AG04450 (cell line): ENCODE measurements at regions of chr19 and their contacts with region 1.

Region 1: GRCh38 chr19:4851551-4852290 is 15.7 kb downstream of the PLIN3 start:
- DNase-seq: no peak
- H3K4me3 ChIP-seq: no peak overlapping the region
- H3K27ac ChIP-seq: no peak overlapping the region
- H3K27me3 ChIP-seq: no peaks in the 10 kb centered on the region
- CTCF ChIP-seq: peak; percentile 84

Region 2: GRCh38 chr19:4723367-4724187 is 128.1 kb before region 1 on chr19 and contains the start of gene DPP9:
- CTCF ChIA-PET with region 1: no interaction called
- POLR2A ChIA-PET with region 1: no interaction called
- DNase-seq: peak; percentile 96
- H3K4me3 ChIP-seq: peak within 1 kb of the TSS; percentile 97
- H3K27ac ChIP-seq: peak within 1 kb of the TSS; percentile 39
- H3K27me3 ChIP-seq: no peaks in the 10 kb centered on the region
- CTCF ChIP-seq: peak; percentile 31
- polyA plus RNA-seq, gene DPP9: 5.6 and 9.0 TPM in 2 replicates

Region 3: DNA sequence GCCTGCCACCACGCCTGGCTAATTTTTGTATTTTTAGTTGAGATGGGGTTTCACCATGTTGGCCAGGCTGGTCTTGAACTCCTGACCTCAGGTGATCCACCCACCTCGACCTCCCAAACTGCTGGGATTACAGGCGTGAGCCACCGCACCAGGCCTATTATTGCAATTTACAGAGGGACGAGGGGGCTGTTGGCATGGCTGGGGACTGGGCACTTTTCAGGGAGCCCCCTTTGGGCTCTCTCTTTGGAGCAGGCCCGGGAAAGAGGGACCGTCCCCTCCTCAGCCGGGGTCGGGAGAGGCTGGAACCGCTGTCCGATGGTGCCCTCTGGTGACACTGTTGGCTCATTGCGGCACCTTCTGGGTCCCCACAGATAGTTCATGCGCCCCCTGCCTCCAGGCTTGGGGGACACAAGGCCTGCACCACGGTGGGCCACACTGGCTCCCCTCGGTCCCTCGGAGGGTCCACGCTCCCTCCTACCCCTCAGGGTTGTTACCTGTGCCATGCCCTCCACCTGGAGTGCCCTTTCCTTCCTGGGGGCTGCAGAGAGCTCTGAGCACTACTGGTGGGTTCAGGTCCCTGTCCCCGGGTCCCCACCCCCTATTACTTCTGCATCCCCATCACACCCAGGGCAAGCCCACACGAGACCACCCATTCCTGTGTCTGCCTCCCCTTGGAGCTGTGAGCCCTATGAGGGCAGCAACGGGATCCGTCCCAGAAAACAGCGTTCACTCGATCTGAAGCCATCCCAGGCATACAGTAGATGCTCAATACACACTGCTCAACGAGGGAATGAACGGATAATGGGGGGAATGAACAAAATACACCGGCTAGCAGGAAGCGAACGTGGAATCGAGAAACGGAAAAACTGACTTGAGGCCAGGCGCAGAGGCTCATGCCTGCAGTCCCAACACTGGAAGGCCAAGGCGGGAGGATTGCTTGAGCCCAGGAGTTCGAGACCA is 47.7 kb before region 1 on chr19:
- CTCF ChIA-PET with region 1: interaction called, 109 read pairs
- POLR2A ChIA-PET with region 1: interaction called, 6 read pairs
- DNase-seq: no peak
- H3K4me3 ChIP-seq: no peak overlapping the region
- H3K27ac ChIP-seq: no peak overlapping the region
- H3K27me3 ChIP-seq: no peaks in the 10 kb centered on the region
- CTCF ChIP-seq: peak; percentile 71

Region 4: DNA sequence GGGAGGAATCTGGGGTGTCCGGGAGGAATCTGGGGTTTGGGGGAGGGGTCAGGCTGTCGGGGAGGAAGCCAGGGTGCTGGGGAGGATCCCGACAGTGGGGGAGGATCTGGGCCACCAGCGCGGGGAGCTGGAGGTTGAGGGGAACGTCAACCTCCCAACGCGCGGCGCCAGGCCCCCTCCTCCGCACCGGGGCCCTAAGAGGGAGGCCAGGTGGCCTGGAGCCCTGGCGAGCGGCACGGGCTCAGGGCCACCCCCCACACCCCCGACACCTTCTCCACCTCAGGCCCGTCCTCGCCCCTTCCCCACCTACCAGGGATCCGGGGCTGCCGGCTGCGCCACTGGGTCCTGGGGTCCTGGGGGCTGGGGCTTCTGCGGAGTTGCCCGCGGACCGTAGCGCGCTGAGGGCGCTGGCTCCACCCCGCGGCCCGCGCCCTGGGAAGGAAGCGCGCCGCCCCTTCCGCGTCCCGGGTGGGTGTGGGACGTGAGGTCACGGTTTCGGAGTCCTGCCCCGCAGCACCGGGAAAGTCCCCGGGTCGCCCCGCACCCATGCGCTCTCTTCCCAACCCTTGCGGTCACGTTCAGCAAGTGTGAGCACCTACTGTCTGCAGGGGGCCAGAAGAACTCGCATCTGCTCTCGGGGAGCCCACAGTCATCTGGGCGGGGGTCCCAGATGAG is 20.3 kb before region 1 on chr19 and contains the start of gene TICAM1:
- CTCF ChIA-PET with region 1: interaction called, 10 read pairs
- POLR2A ChIA-PET with region 1: interaction called, 5 read pairs
- DNase-seq: no peak
- H3K4me3 ChIP-seq: peak within 1 kb of the TSS; percentile 84
- H3K27ac ChIP-seq: no peak within 1 kb of the TSS
- H3K27me3 ChIP-seq: no peaks in the 10 kb centered on the region
- CTCF ChIP-seq: no peak
- polyA plus RNA-seq, gene TICAM1: 1.0 and 2.9 TPM in 2 replicates

Region 5: DNA sequence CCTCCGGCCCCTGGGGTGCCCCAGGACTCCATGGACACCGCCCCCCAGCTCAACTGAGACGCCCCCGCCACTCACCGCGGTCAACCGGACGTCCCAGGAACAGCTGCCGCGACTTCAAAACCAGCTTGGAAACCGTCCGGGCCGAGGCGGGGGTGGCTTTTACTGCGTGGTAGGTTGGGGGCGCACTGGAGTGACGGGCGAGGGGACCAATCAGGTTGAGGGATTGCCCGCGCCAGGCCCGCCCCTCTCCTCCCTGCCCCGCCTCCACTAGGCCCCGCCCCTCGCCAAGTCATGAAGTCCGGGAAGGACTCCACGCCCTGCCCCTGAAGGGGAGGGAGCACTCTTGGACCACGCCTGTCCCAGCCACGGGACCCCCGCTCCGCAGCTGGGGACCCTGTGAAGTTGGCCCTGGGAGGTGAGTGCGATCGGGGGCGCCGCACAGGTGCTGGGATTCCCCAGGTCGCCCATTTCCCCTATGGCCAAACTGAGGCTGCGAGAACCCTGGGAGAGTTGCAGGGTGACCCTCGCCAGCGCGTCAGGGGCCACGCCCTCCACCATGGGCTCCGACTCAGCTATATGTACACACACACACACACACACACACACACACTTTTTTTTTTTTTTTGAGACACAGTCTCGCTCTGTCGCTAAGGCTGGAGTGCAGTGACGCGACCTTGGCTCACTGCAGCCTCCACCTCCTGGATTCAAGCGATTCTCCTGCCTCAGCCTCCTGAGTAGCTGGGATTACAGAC is 16.0 kb after region 1 on chr19 and contains the start of gene PLIN3:
- CTCF ChIA-PET with region 1: interaction called, 16 read pairs
- POLR2A ChIA-PET with region 1: no interaction called
- DNase-seq: peak; percentile 92
- H3K4me3 ChIP-seq: peak within 1 kb of the TSS; percentile 89
- H3K27ac ChIP-seq: peak within 1 kb of the TSS; percentile 70
- H3K27me3 ChIP-seq: no peaks in the 10 kb centered on the region
- CTCF ChIP-seq: no peak
- polyA plus RNA-seq, gene PLIN3: 103 and 125 TPM in 2 replicates